Endothelial cell of umbilical vein (primary cell): ENCODE measurements at regions of chr14 and their contacts with region 1.

Region 1: DNA sequence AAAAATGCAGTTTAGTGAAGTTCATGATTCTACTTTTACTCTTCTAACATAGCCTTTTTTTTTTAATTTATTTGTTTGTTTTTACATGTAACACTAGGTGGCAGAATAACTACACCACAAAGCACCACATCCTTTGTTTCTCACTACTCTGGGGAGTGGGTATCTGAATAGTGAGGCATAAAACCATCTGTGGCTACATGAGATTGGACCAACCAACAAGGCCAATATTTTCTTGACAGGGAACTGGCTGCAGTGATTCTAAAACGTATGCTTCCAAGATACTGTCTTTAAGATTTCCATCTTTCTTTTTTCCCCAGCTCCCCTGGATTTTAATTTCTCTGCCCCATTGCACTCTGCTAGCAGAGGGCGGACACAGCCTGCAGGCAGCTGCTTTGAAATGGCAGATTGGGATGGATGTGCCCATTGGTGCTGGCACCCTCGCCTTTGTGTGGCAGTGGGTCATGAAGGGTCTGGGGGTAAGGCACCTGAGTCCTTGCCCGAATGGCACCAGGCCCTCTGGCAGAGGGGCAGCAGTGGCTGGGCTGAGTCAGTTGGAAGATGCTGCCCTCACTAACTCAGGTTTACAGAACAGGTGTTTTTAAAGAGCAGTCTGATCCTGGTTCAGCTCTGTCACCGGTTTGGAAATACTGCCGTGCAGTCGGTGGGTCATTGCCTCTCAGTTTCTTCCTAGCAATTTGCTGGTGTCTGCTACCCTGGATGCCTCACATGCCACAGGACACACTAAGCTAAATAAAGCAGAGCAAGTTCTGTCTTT is 429.1 kb downstream of the RAD51B start:
- DNase-seq: peak; percentile 85
- H3K4me3 ChIP-seq: no peak overlapping the region
- H3K27ac ChIP-seq: peak overlapping the region; percentile 16
- H3K4me1 ChIP-seq: peaks cover 52% of the 10 kb centered on the region
- H3K27me3 ChIP-seq: no peaks in the 10 kb centered on the region
- CTCF ChIP-seq: peak; percentile 22 to 29
- POLR2A ChIP-seq: no peak

Region 2: GRCh38 chr14:67934008-67934481 is 314.6 kb before region 1 on chr14:
- CTCF ChIA-PET with region 1: interaction called, 43 read pairs
- POLR2A ChIA-PET with region 1: no interaction called
- dilution Hi-C with region 1: no loop called
- intact Hi-C with region 1: no loop called
- DNase-seq: peak; percentile 89
- H3K4me3 ChIP-seq: no peak overlapping the region
- H3K27ac ChIP-seq: peak overlapping the region; percentile 27
- H3K4me1 ChIP-seq: peaks cover 11% of the 10 kb centered on the region
- H3K27me3 ChIP-seq: no peaks in the 10 kb centered on the region
- CTCF ChIP-seq: peak; percentile 46 to 57
- POLR2A ChIP-seq: no peak

Region 3: DNA sequence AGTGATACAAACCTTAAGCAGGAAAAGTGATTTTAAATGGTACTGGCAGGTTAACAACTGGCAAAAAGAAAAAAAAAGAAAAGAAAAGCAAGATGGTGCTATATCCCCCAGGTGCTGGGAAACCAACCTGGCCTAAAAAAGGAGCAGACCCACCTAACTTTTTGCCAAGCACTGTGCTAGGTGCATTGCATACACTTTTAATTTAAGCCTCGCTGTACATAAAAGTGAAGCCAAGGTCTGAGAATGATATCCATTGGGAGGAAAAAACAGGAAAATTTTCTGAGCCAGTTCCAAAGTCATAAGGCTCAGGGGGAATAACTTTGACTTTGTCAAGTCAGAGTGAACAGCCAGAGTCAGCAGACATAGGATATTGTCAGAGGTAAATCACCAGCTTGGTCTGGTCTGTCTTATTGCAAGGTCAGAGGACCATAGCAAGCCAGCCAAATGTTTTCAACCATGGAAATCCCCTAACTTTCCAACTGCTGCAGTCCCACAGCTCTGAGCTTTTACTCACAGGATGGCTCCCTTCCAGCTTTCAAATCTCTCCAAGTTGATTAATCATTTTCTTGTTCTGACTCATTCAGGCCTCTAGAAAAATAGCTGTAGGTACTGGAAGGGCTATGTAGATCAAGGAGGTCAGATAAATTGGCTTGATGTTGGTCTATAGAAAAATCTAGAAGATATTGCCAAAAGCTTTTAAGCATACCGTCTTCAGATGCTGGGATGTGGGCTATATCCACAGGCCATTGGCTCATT is 16.2 kb before region 1 on chr14:
- CTCF ChIA-PET with region 1: interaction called, 12 read pairs
- POLR2A ChIA-PET with region 1: no interaction called
- dilution Hi-C with region 1: no loop called
- intact Hi-C with region 1: no loop called
- DNase-seq: peak; percentile 99
- H3K4me3 ChIP-seq: peak overlapping the region in 1 of 3 experiments; percentile 11
- H3K27ac ChIP-seq: peak overlapping the region; percentile 99
- H3K4me1 ChIP-seq: peaks cover 30% of the 10 kb centered on the region
- H3K27me3 ChIP-seq: no peaks in the 10 kb centered on the region
- CTCF ChIP-seq: no peak
- POLR2A ChIP-seq: peak; percentile 39

Region 4: DNA sequence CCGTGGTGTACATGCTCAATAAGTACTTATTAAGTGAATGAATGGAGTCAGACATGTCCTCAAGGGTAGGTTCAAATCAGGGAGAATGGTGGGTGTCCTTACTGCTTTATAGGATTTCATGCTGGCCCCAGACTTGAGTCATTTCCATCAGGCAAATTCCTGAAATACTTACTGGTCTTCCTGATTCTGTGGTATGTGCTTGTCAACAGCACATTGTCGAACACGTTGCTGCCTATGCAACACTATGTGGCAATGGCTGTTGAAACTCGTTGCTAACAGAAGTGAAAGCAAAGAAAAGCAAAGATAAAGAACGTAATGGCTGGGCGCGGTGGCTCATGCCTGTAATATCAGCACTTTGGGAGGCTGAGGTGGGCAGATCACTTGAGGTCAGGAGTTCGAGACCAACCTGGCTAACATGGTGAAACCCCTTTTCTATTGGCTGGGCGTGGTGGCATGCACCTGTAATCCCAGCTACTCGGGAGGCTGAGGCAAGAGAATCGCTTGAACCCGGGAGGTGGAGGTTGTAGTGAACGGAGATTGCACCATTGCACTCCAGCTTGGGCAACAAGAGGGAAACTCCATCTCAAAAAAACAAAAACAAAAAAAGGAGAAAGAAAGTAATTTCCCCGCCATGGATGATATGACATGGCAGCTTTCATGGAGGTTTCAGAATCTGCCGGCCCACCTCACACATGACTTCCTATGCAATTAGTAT is 329.3 kb after region 1 on chr14:
- CTCF ChIA-PET with region 1: interaction called, 3 read pairs
- POLR2A ChIA-PET with region 1: no interaction called
- dilution Hi-C with region 1: no loop called
- intact Hi-C with region 1: loop called (anchors 1 kb)
- DNase-seq: peak; percentile 94
- H3K4me3 ChIP-seq: no peak overlapping the region
- H3K27ac ChIP-seq: peak overlapping the region; percentile 77
- H3K4me1 ChIP-seq: peaks cover 40% of the 10 kb centered on the region
- H3K27me3 ChIP-seq: no peaks in the 10 kb centered on the region
- CTCF ChIP-seq: no peak
- POLR2A ChIP-seq: peak; percentile 77

Region 5: DNA sequence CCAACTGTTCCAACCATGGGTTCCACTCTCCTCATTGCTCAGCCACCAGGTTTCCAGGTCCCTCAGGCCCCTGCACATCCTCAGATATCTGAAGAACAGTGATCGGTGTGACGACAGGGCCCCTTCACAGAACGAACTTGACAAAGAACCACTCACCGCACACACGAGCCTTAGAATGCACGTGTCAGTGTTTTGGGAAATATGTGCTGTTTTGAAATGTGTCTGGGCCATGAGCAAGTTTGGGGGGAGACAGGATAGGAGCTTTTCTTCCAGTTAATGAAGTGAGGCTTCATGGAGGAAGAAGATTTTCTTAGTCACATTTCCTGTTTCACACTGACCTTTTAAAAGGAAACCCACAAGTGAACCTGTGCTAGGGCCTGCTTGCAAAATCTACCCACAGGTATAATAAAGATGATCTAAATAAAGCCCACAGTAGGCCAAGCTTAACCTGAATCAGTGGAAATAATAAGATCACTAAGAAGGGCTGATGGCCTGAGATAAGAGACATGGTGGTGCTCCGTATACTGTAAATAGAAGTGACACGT is 485.6 kb after region 1 on chr14:
- CTCF ChIA-PET with region 1: no interaction called
- POLR2A ChIA-PET with region 1: no interaction called
- dilution Hi-C with region 1: no loop called
- intact Hi-C with region 1: loop called (anchors 1 kb)
- DNase-seq: peak; percentile 34
- H3K4me3 ChIP-seq: no peak overlapping the region
- H3K27ac ChIP-seq: no peak overlapping the region
- H3K4me1 ChIP-seq: peaks cover 10% of the 10 kb centered on the region
- H3K27me3 ChIP-seq: no peaks in the 10 kb centered on the region
- CTCF ChIP-seq: no peak
- POLR2A ChIP-seq: no peak

Region 6: DNA sequence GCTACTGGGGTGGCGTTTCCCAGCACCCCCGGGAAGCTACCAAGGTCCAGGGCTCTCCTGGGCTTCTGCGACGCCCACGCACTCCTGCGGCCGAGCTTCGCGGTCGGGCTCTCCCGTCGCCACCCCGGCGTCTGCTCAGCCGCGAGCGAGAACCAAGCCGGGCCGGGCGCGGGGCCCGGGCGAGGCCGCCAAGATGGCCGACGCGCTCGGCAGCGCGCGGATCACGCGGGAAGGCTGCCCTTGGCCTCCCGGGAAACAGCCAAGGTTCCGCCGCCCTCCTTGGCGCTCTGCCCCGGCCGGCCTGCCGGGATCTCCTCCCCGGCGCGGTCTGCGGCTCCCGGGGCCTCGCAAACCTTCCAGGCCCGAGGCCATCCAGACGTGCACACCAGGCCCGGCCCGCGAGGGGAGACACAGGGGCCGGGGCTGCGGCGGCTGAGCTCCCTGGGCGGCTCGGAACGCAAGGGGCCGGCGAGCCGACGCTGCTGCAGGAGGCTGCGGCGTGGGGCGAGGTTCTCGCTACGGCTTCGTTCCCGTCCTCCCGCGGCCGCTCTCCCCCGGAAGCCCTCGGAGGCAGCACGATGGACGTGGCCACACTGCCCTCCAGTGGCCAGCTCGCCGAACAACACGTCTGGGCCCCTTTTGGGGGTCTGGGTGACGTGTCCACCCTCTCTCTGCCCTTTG is 567.7 kb after region 1 on chr14:
- CTCF ChIA-PET with region 1: interaction called, 58 read pairs
- POLR2A ChIA-PET with region 1: no interaction called
- dilution Hi-C with region 1: no loop called
- intact Hi-C with region 1: loop called (anchors 1 kb)
- DNase-seq: peak; percentile 89
- H3K4me3 ChIP-seq: peak overlapping the region in 1 of 3 experiments; percentile 24
- H3K27ac ChIP-seq: peak overlapping the region; percentile 71
- H3K4me1 ChIP-seq: peaks cover 21% of the 10 kb centered on the region
- H3K27me3 ChIP-seq: no peaks in the 10 kb centered on the region
- CTCF ChIP-seq: peak; percentile 95
- POLR2A ChIP-seq: peak; percentile 46